ENCODE measurements at regions of chr19 and their contacts with region 1.

Region 1: GRCh38 chr19:10416380-10417257 is 3.7 kb upstream of the PDE4A start:
- DNase-seq: peak; percentile 83 to 100
- H3K4me3 ChIP-seq: peak overlapping the region; percentile 42 to 66 (median 54)
- H3K27ac ChIP-seq: no peak overlapping the region
- H3K4me1 ChIP-seq: peaks cover 5 to 26% (median 13%) of the 10 kb centered on the region in 4 experiments
- H3K27me3 ChIP-seq: peaks cover 25 to 62% (median 52%) of the 10 kb centered on the region in 4 experiments
- CTCF ChIP-seq: peak; percentile 69 to 79 (median 78)
- EP300 ChIP-seq: peak in 1 of 2 experiments; percentile 85; a peak in 1 of 3 replicates
- POLR2A ChIP-seq: no peak
- RAD21 ChIP-seq: peak; percentile 28 to 30; a peak in 3 of 4 replicates

Region 2: DNA sequence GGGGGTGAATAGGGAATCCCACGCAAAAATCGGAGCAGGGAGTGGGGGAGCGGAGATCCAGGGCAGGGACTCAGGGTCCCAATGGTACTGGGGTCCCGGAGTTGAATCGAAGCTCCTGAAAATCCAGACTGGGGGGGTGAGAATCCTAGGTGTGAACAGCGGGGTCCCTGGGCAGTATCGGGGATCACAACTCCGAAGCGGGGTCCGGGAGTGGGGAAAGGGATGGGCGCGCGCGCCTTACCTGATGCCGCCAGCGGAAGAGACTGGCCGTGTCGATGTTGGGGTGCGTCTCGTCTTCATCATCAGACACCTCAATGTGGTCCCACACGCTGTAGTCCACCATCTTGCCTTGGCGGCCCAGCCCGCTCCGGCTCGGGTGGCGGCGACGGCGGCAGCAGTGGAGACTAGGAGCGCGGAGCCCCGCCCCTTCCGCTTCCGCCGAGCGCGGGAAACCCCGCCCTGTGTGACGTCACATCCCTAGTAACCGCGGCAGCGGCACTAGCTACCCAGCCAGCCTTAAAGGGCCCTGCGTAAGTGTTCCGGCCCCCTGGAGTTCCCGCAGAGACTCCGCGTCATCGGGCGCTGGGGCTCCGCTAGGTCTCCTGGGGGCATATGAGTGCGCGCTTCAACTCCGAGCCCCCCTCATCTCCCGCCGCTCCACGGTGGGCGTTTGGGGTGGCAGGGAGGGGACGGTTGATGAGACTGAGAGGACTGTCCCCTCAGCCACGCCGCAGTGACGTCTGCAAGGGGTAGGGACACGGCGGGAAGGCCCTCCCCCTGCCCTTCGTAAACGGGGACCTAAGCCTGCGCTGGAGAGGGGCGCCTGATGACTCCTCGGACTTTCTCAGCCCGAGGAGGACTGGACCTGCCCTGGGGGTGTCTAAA is 13.2 kb before region 1 on chr19 and contains the start of gene CDC37:
- CTCF ChIA-PET with region 1: interaction called, 172 read pairs
- POLR2A ChIA-PET with region 1: interaction called, 33 read pairs
- DNase-seq: peak; percentile 86 to 99
- H3K4me3 ChIP-seq: peak within 1 kb of the TSS; percentile 71 to 98 (median 98)
- H3K27ac ChIP-seq: peak within 1 kb of the TSS; percentile 78
- H3K4me1 ChIP-seq: peaks cover 3 to 8% (median 5%) of the 10 kb centered on the region in 4 experiments; a peak in 5 of 7 replicates
- H3K27me3 ChIP-seq: peaks cover 3 to 15% (median 9%) of the 10 kb centered on the region in 4 experiments; a peak in 5 of 7 replicates
- CTCF ChIP-seq: peak in 2 of 3 experiments; percentile 0 to 10; a peak in 2 of 4 replicates
- EP300 ChIP-seq: no peak
- POLR2A ChIP-seq: peak in 1 of 2 experiments; percentile 95; a peak in 2 of 3 replicates
- RAD21 ChIP-seq: no peak
- total RNA-seq, gene CDC37: 162 and 164 TPM in 2 replicates

Region 3: GRCh38 chr19:10450853-10451609 is 34.4 kb after region 1 on chr19:
- CTCF ChIA-PET with region 1: interaction called, 15 read pairs
- POLR2A ChIA-PET with region 1: no interaction called
- DNase-seq: peak; percentile 31 to 81
- H3K4me3 ChIP-seq: no peak overlapping the region
- H3K27ac ChIP-seq: no peak overlapping the region
- H3K4me1 ChIP-seq: peaks cover 0 to 17% (median 7%) of the 10 kb centered on the region in 4 experiments; a peak in 4 of 7 replicates
- H3K27me3 ChIP-seq: 0 out of 7 replicates have a peak, but pooled peaks cover 0 to 1% (median 0%) of the 10 kb centered on the region in 4 experiments
- CTCF ChIP-seq: no peak
- EP300 ChIP-seq: no peak
- POLR2A ChIP-seq: no peak
- RAD21 ChIP-seq: no peak

Region 4: DNA sequence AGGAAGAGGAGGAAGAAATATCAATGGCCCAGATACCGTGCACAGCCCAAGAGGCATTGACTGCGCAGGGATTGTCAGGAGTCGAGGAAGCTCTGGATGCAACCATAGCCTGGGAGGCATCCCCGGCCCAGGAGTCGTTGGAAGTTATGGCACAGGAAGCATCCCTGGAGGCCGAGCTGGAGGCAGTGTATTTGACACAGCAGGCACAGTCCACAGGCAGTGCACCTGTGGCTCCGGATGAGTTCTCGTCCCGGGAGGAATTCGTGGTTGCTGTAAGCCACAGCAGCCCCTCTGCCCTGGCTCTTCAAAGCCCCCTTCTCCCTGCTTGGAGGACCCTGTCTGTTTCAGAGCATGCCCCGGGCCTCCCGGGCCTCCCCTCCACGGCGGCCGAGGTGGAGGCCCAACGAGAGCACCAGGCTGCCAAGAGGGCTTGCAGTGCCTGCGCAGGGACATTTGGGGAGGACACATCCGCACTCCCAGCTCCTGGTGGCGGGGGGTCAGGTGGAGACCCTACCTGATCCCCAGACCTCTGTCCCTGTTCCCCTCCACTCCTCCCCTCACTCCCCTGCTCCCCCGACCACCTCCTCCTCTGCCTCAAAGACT is 50.6 kb after region 1 on chr19:
- CTCF ChIA-PET with region 1: interaction called, 15 read pairs
- POLR2A ChIA-PET with region 1: no interaction called
- DNase-seq: no peak
- H3K4me3 ChIP-seq: no peak overlapping the region; a peak in 1 of 8 replicates
- H3K27ac ChIP-seq: no peak overlapping the region
- H3K4me1 ChIP-seq: peaks cover 0 to 16% (median 10%) of the 10 kb centered on the region in 4 experiments; a peak in 6 of 7 replicates
- H3K27me3 ChIP-seq: peaks cover 0 to 5% (median 0%) of the 10 kb centered on the region in 4 experiments; a peak in 2 of 7 replicates
- CTCF ChIP-seq: no peak
- EP300 ChIP-seq: no peak
- POLR2A ChIP-seq: no peak
- RAD21 ChIP-seq: no peak

Region 5: GRCh38 chr19:10491472-10492047 is 74.9 kb after region 1 on chr19:
- CTCF ChIA-PET with region 1: no interaction called
- POLR2A ChIA-PET with region 1: no interaction called
- DNase-seq: no peak
- H3K4me3 ChIP-seq: no peak overlapping the region
- H3K27ac ChIP-seq: no peak overlapping the region
- H3K4me1 ChIP-seq: no peaks in the 10 kb centered on the region
- H3K27me3 ChIP-seq: no peaks in the 10 kb centered on the region
- CTCF ChIP-seq: no peak
- EP300 ChIP-seq: no peak
- POLR2A ChIP-seq: no peak
- RAD21 ChIP-seq: no peak